Posterior vena cava (tissue), 2 donors: ENCODE measurements at regions of chr16 and their contacts with region 1.

Region 1: GRCh38 chr16:78761427-78761826 is 662.0 kb downstream of the WWOX start:
- DNase-seq: no peak

Region 2: DNA sequence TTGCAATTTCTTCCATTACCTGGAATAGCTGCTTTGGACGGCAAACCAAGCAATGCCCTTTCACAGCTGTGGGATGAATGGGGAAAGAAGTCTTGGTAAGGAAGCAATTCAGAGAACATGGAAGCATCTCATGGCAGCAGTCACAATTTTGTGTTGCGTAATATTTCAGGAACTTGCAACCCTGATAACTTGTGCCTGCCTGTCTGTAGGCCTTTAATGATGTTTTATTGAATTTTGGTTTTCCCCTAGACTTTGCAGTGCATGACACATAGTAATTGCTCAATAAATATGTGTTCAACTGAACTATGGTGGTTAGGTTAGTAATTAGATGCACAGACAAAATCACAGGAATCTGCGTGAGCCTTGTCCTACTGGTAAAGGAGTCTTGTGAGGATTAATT is 222.5 kb before region 1 on chr16:
- intact Hi-C with region 1: loop called in 1 of 2 experiments (anchors 10 kb)
- DNase-seq: no peak